Panc1 (cell line): ENCODE measurements at regions of chr6 and their contacts with region 1.

Region 1: DNA sequence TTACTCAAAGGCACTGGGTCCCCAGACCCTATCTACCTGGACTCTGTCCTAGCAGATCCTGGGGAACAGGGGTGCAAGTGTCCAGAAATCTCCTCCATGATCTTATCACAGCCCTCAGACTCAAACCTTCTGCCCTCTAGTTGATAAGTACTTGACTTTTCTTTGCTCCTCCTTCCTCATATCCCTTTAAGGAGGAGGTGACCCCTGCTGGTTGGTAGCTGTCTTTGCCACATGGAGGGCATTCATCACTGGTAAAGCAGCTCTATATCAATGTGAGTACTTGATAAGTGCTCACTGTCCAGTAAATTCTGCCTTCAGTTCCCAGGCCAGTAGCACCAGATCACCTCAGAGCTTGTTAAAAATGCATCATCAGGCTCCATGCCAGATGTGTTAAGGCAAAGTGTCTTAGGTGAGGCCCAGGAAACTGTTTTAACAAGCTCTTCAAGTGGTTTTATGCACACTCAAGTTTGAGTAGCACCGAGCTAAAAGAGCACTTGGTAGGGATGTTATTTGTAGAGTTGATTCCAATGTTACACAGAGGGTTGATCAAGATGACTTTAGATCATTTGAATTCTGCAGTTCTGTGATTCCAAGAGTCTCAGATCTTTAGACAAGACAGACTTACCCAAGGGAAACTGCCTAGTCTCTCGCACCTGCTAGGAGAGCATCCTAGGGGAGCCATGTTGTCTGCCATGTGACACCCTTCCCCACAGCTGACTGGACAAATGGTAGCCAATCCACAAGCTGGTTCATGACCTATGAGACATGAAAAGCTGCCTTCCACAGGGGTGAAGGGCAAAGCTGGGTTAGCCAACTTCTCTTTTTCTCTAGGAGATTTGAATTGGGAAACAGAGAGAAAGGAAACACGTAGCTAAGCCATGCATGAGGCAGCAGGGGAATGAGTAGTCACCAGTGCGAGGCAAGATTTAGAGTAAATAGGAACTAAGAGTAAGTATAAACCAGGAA is 18.6 kb downstream of the TREML2 start:
- DNase-seq: peak; percentile 24
- ATAC-seq: peak; percentile 93
- H3K4me3 ChIP-seq: no peak overlapping the region
- H3K27ac ChIP-seq: no peak overlapping the region
- H3K4me1 ChIP-seq: no peaks in the 10 kb centered on the region
- H3K27me3 ChIP-seq: peaks cover 5% of the 10 kb centered on the region; the same call in 1 of the 2 replicates
- CTCF ChIP-seq: peak; percentile 76

Region 2: GRCh38 chr6:40395066-40395704 is 787.2 kb before region 1 on chr6:
- CTCF ChIA-PET with region 1: no interaction called
- POLR2A ChIA-PET with region 1: no interaction called
- in situ Hi-C with region 1: no loop called
- intact Hi-C with region 1: no loop called
- DNase-seq: no peak
- ATAC-seq: 0 out of 2 replicates have a peak, but pooled peaks have one; percentile 13
- H3K4me3 ChIP-seq: no peak overlapping the region
- H3K27ac ChIP-seq: no peak overlapping the region
- H3K4me1 ChIP-seq: no peaks in the 10 kb centered on the region
- H3K27me3 ChIP-seq: peaks cover 1% of the 10 kb centered on the region; the same call in 1 of the 2 replicates
- CTCF ChIP-seq: no peak

Region 3: DNA sequence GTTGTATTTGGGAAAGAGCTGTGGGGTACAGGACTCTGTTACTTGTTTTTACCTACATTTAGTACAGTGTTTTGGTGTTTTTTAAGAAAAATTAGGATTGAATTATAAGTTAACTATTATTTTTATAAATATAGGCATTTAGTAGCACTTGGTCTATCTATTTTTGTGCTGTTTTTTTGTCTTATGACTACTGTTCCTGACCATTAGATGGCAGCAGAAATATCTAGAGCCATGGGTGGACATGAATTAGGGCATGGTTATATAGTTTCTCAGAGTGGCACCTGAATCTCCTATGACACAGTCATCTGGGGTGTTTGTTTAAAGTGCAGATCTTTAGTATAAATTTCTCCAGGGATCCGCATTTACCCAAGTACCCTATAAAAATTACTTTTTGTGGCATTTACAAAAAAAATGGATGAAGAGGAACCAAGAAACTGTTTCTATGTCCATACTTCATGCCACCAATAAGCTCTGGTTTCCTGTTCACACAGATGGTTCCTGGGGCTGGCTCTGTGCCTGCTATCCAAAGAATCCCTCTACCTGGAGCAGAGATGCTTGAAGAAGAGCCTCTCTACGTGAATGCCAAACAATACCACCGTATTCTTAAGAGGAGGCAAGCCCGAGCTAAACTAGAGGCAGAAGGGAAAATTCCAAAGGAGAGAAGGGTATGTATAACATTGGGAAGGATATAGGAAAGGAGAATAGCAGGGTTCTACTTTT is 89.8 kb before region 1 on chr6:
- CTCF ChIA-PET with region 1: interaction called, 5 read pairs
- POLR2A ChIA-PET with region 1: no interaction called
- in situ Hi-C with region 1: no loop called
- intact Hi-C with region 1: loop called (anchors 10 kb)
- DNase-seq: no peak
- ATAC-seq: no peak
- H3K4me3 ChIP-seq: no peak overlapping the region
- H3K27ac ChIP-seq: no peak overlapping the region
- H3K4me1 ChIP-seq: no peaks in the 10 kb centered on the region
- H3K27me3 ChIP-seq: no peaks in the 10 kb centered on the region
- CTCF ChIP-seq: peak; percentile 64; the same call in 1 of the 2 replicates

Region 4: GRCh38 chr6:41239467-41240159 is 57.3 kb after region 1 on chr6:
- CTCF ChIA-PET with region 1: no interaction called
- POLR2A ChIA-PET with region 1: no interaction called
- in situ Hi-C with region 1: no loop called
- intact Hi-C with region 1: no loop called
- DNase-seq: no peak
- ATAC-seq: no peak
- H3K4me3 ChIP-seq: no peak overlapping the region
- H3K27ac ChIP-seq: no peak overlapping the region
- H3K4me1 ChIP-seq: no peaks in the 10 kb centered on the region
- H3K27me3 ChIP-seq: peaks cover 34% of the 10 kb centered on the region
- CTCF ChIP-seq: no peak

Region 5: DNA sequence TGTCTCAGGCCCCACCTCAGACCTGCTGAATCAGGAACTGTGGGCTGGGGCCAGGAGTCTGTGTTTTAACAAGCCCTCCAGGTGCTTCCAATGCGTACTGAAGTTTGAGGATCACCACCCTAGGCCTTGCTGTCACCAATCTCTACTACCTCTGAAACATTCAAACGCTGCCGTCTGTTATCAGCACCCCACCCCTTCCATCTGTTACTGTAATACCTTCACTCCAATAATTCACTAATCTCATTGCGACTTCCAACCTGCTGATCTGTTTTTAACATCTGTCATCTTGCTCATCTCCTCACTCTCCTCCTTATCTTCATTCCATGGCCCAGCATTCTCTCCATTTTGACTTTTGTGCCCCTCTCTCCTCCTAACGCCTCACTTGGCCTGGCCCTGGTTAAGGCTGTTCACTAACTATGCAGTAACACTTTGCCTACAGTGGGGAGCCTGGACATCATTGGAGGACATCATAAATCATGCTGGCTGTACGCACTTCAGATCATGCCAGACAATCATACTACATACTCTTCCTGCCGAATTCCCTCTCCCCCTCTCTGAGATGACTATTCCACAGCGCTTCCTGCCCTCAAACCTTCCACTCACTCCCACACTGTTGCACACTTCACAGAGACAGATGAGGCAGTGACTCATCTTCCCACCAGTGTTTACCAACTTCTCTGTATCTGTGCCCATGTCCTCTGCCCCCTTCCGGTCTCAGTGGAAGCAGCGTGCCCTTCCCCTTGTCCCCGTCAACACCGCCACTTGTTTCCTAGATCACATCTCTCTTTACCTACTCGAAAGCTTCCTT is 1015.4 kb after region 1 on chr6:
- CTCF ChIA-PET with region 1: interaction called, 10 read pairs
- POLR2A ChIA-PET with region 1: no interaction called
- in situ Hi-C with region 1: no loop called
- intact Hi-C with region 1: no loop called
- DNase-seq: no peak
- ATAC-seq: peak; percentile 57; the same call in 1 of the 2 replicates
- H3K4me3 ChIP-seq: no peak overlapping the region
- H3K27ac ChIP-seq: no peak overlapping the region
- H3K4me1 ChIP-seq: peaks cover 9% of the 10 kb centered on the region; the same call in 1 of the 2 replicates
- H3K27me3 ChIP-seq: no peaks in the 10 kb centered on the region
- CTCF ChIP-seq: no peak